Sigmoid colon (tissue), 7 donors: ENCODE measurements at regions of chr14 and their contacts with region 1.

Region 1: DNA sequence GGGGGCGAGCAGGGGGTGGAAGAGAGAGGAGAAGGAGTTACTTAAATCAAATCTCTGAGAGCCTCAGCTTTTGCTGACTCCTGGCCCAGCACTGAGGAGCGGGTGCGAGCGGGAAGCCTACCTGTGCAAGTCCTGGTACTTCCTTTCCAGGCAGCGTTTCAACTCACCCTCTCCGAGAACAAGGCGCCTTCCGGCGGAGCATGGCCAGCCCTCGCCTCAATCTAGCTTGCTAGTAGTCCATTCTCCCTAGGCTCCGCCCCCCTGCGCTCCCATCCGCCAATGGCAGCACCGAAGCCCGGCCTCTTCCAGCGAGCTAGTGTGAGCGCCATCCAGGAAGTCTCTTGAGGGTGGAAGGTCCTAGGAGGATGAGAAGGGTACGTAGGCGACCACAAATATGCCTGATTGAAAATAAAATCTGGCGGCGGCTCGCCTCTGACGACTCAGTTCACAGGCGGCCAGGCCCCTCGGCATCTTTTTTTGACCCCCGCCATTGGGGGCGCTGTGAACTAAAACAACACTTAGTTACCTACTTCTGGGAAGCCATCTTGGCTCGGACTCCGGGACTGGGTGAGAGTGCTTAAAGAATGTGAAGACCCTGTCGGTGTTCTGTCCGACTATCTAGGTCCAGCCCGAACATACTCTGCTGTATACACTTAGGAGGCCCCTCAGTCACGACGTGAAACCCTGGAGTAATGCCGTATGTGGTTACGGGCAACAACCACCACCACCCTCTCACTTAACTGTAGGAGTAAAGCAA is at the start of gene CHD8:
- DNase-seq: peak; percentile 100
- H3K4me3 ChIP-seq: peak within 1 kb of the TSS; percentile 74 to 89 (median 86)
- H3K27ac ChIP-seq: peak within 1 kb of the TSS; percentile 87 to 97 (median 92)
- H3K4me1 ChIP-seq: peaks cover 0 to 26% (median 25%) of the 10 kb centered on the region in 4 donors
- H3K27me3 ChIP-seq: no peaks in the 10 kb centered on the region
- CTCF ChIP-seq: peak in 2 of 4 experiments; percentile 23 to 37
- EP300 ChIP-seq: no peak
- POLR2A ChIP-seq: peak in 1 of 2 donors; percentile 49
- total RNA-seq, gene CHD8: 36.0 to 53.5 (median 44.8) TPM

Region 2: DNA sequence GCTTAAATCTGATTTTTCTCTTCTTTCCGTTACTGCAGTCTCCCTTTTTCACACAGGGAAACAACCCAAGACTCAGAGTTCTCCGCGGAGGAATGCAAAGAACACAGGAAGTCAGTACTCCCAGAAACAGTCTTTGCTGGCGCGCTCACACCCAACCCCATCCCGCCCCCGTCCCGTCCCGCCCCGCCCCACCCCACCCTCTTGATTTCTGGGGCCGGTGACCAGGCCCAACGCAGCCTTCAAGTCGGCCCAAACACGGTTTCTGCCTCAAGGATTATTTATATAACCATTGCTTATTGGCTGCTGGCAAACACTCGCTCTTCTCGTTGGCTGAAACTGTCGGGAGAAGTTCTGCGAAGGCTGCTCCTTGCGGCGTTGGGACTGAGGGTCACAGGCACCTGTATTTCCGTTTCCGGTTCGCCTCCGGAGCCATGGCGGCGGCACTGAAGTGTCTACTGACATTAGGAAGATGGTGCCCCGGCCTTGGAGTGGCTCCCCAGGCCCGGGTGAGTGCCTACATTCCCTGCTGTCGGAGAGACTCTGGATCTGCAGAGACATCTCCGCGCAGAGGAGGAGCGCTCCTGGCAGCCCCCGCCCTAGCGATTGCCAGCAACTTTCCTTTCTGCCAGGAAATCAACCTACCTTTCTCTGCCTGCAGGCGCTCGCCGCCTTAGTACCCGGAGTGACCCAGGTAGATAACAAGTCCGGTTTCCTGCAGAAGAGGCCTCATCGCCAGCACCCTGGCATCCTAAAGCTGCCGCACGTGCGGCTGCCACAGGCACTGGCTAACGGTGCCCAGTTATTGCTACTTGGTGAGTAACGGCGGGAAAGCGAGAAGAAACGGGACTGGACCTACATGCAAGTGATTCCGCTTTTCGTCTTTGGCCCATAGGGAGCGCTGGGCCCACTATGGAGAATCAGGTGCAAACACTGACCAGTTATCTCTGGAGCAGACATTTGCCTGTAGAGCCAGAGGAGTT is 466.2 kb before region 1 on chr14 and contains the start of gene METTL17:
- intact Hi-C with region 1: loop called (anchors 10 kb)
- DNase-seq: peak; percentile 98
- H3K4me3 ChIP-seq: peak within 1 kb of the TSS; percentile 67 to 88 (median 76)
- H3K27ac ChIP-seq: peak within 1 kb of the TSS; percentile 81 to 86 (median 84)
- H3K4me1 ChIP-seq: peaks cover 0 to 38% (median 25%) of the 10 kb centered on the region in 4 donors
- H3K27me3 ChIP-seq: no peaks in the 10 kb centered on the region
- CTCF ChIP-seq: peak in 2 of 4 experiments; percentile 11 to 25
- EP300 ChIP-seq: no peak
- POLR2A ChIP-seq: peak; percentile 75 to 79
- total RNA-seq, gene METTL17: 72.9 to 103 (median 90.0) TPM

Region 3: GRCh38 chr14:21437063-21437901 is 18.8 kb before region 1 on chr14:
- intact Hi-C with region 1: loop called (anchors 1 kb)
- DNase-seq: peak; percentile 98
- H3K4me3 ChIP-seq: peak overlapping the region; percentile 52 to 89 (median 77)
- H3K27ac ChIP-seq: peak overlapping the region; percentile 85 to 90 (median 86)
- H3K4me1 ChIP-seq: peaks cover 0 to 27% (median 22%) of the 10 kb centered on the region in 4 donors
- H3K27me3 ChIP-seq: no peaks in the 10 kb centered on the region
- CTCF ChIP-seq: no peak
- EP300 ChIP-seq: no peak
- POLR2A ChIP-seq: peak in 1 of 2 donors; percentile 11

Region 4: GRCh38 chr14:21476925-21477681 is 21.0 kb after region 1 on chr14 and contains the starts of genes RAB2B and TOX4:
- intact Hi-C with region 1: loop called (anchors 1 kb)
- DNase-seq: peak; percentile 98
- H3K4me3 ChIP-seq: peak within 1 kb of the TSS; percentile 68 to 86 (median 72)
- H3K27ac ChIP-seq: peak within 1 kb of the TSS; percentile 84 to 90 (median 86)
- H3K4me1 ChIP-seq: peaks cover 0 to 27% (median 23%) of the 10 kb centered on the region in 4 donors
- H3K27me3 ChIP-seq: no peaks in the 10 kb centered on the region
- CTCF ChIP-seq: peak; percentile 96 to 100 (median 100)
- EP300 ChIP-seq: no peak
- POLR2A ChIP-seq: peak; percentile 82 to 85
- total RNA-seq, gene RAB2B: 22.7 to 28.5 (median 26.9) TPM
- total RNA-seq, gene TOX4: 40.0 to 71.8 (median 48.5) TPM

Region 5: GRCh38 chr14:21510735-21511657 is 54.9 kb after region 1 on chr14 and contains the start of gene METTL3:
- intact Hi-C with region 1: loop called (anchors 2 kb)
- DNase-seq: peak; percentile 99
- H3K4me3 ChIP-seq: peak within 1 kb of the TSS; percentile 54 to 77 (median 72)
- H3K27ac ChIP-seq: peak within 1 kb of the TSS; percentile 81 to 85 (median 84)
- H3K4me1 ChIP-seq: peaks cover 0 to 24% (median 20%) of the 10 kb centered on the region in 4 donors
- H3K27me3 ChIP-seq: no peaks in the 10 kb centered on the region
- CTCF ChIP-seq: no peak
- EP300 ChIP-seq: no peak
- POLR2A ChIP-seq: no peak
- total RNA-seq, gene METTL3: 60.9 to 84.9 (median 75.4) TPM